Left ventricle myocardium inferior (tissue), 1 donor: ENCODE measurements at regions of chr1 and their contacts with region 1.

Region 1: GRCh38 chr1:203871107-203871875 is 9.9 kb downstream of the SNRPE start:
- DNase-seq: no peak
- H3K4me3 ChIP-seq: no peak overlapping the region
- H3K27ac ChIP-seq: peak overlapping the region; percentile 47
- H3K4me1 ChIP-seq: peaks cover 16% of the 10 kb centered on the region
- H3K27me3 ChIP-seq: no peaks in the 10 kb centered on the region
- CTCF ChIP-seq: peak; percentile 89

Region 2: GRCh38 chr1:203765029-203765837 is 106.1 kb before region 1 on chr1 and contains the start of gene LAX1:
- intact Hi-C with region 1: no loop called
- DNase-seq: no peak
- H3K4me3 ChIP-seq: no peak within 1 kb of the TSS
- H3K27ac ChIP-seq: no peak within 1 kb of the TSS
- H3K4me1 ChIP-seq: peaks cover 4% of the 10 kb centered on the region
- H3K27me3 ChIP-seq: no peaks in the 10 kb centered on the region
- CTCF ChIP-seq: no peak
- total RNA-seq, gene LAX1: not detected

Region 3: DNA sequence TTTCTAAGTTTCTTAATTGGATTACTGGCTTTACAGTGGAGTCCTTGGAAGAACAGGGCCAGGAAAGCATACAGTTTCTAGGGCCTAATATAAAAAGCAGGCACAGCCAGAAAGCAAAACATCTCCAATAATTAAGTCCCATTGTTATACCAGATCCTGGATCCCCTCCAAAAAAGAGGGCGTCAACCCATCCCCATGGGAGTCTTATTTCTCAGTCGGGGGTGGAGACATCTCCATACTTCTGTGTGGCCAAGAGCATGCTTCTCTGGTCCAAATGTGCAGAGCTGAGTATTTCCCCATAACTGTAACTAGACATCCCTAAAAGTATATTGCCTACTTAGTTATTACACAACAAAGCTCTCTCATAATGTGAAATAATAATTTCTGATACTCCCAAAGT is 97.4 kb after region 1 on chr1:
- intact Hi-C with region 1: no loop called
- DNase-seq: peak; percentile 23
- H3K4me3 ChIP-seq: no peak overlapping the region
- H3K27ac ChIP-seq: no peak overlapping the region
- H3K4me1 ChIP-seq: peaks cover 21% of the 10 kb centered on the region
- H3K27me3 ChIP-seq: no peaks in the 10 kb centered on the region
- CTCF ChIP-seq: no peak

Region 4: GRCh38 chr1:204065174-204065985 is 194.1 kb after region 1 on chr1:
- intact Hi-C with region 1: no loop called
- DNase-seq: peak; percentile 64
- H3K4me3 ChIP-seq: no peak overlapping the region
- H3K27ac ChIP-seq: peak overlapping the region; percentile 66
- H3K4me1 ChIP-seq: peaks cover 19% of the 10 kb centered on the region
- H3K27me3 ChIP-seq: no peaks in the 10 kb centered on the region
- CTCF ChIP-seq: no peak

Region 5: GRCh38 chr1:204130989-204131892 is 259.9 kb after region 1 on chr1:
- intact Hi-C with region 1: loop called (anchors 2 kb)
- DNase-seq: no peak
- H3K4me3 ChIP-seq: no peak overlapping the region
- H3K27ac ChIP-seq: no peak overlapping the region
- H3K4me1 ChIP-seq: peaks cover 44% of the 10 kb centered on the region
- H3K27me3 ChIP-seq: no peaks in the 10 kb centered on the region
- CTCF ChIP-seq: no peak